CD14-positive monocyte (primary cell): ENCODE measurements at regions of chr2 and their contacts with region 1.

Region 1: DNA sequence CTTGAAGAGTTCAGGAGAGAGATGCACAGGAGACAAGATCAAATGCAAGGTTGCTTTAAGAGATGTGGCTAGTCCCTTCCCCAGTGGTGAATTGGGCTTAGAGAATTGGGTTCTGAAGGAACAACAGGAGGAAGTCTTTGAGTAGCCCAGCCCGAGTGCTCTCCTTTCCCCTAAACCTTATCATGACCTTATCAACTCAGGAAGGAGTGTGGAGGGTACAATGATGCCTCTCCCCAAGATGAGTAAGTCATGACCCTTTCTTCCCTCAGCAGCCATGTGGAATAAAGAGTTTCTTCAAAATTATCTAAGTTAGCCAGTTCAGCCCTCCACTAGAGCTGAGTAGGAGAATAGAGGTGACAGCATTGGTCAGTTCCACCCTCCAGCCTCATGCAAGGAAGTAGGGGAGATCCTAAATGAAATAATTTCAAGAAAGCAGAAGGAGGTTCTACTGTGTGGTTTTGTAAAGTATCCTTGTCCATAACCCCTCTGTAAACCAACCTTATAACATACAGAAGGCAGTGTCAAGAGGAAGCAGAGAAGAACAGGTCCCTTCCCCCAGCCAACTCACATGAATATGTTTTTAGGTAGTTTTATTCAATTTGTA is 88.4 kb downstream of the ARHGAP15 start:
- DNase-seq: peak; percentile 7 to 47 (median 19)
- H3K4me3 ChIP-seq: no peak overlapping the region
- H3K4me3 Mint-ChIP-seq: no peak overlapping the region
- H3K27ac ChIP-seq: peak overlapping the region in 1 of 2 donors; percentile 64
- H3K27ac Mint-ChIP-seq: peak overlapping the region; percentile 15 to 87 (median 63)
- H3K4me1 ChIP-seq: peaks cover 4 to 10% of the 10 kb centered on the region in 2 donors
- H3K4me1 Mint-ChIP-seq: peaks cover 10% of the 10 kb centered on the region
- H3K27me3 ChIP-seq: no peaks in the 10 kb centered on the region
- H3K27me3 Mint-ChIP-seq: no peaks in the 10 kb centered on the region
- CTCF ChIP-seq: no peak

Region 2: DNA sequence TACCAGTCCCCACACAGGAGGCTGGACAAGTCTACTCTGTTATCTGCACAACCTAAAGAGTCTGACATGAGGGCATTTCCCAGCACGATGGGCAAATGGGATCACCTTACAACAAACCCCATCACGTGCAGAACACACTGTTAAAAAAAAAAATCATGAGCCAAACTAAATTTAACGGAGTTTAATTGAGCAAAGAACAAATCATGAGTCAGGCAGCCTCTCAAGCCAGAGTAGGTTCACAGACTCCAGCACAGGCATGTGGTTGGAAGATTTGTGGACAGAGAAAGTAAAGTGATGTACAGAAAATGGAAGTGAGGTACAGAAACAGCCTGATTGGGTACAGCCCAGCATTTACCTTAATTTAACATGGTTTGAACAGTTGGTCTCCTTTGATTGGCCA is 280.3 kb before region 1 on chr2:
- intact Hi-C with region 1: no loop called
- DNase-seq: no peak
- H3K4me3 ChIP-seq: no peak overlapping the region
- H3K4me3 Mint-ChIP-seq: no peak overlapping the region
- H3K27ac ChIP-seq: no peak overlapping the region
- H3K27ac Mint-ChIP-seq: peak overlapping the region in 4 of 7 donors; percentile 11 to 68 (median 20)
- H3K4me1 ChIP-seq: no peaks in the 10 kb centered on the region
- H3K4me1 Mint-ChIP-seq: no peaks in the 10 kb centered on the region
- H3K27me3 ChIP-seq: no peaks in the 10 kb centered on the region
- H3K27me3 Mint-ChIP-seq: peaks cover 0 to 1% (median 0%) of the 10 kb centered on the region in 3 donors
- CTCF ChIP-seq: no peak

Region 3: GRCh38 chr2:143110758-143111428 is 106.7 kb before region 1 on chr2:
- intact Hi-C with region 1: loop called in 1 of 2 experiments (anchors 10 kb)
- DNase-seq: peak; percentile 53 to 69 (median 68)
- H3K4me3 ChIP-seq: peak overlapping the region in 1 of 3 experiments; percentile 33
- H3K4me3 Mint-ChIP-seq: peak overlapping the region in 1 of 2 donors; percentile 41
- H3K27ac ChIP-seq: peak overlapping the region in 1 of 2 donors; percentile 42
- H3K27ac Mint-ChIP-seq: peak overlapping the region in 6 of 7 donors; percentile 37 to 89 (median 68)
- H3K4me1 ChIP-seq: peaks cover 5 to 7% of the 10 kb centered on the region in 2 donors
- H3K4me1 Mint-ChIP-seq: peaks cover 10% of the 10 kb centered on the region
- H3K27me3 ChIP-seq: no peaks in the 10 kb centered on the region
- H3K27me3 Mint-ChIP-seq: no peaks in the 10 kb centered on the region
- CTCF ChIP-seq: peak; percentile 94

Region 4: DNA sequence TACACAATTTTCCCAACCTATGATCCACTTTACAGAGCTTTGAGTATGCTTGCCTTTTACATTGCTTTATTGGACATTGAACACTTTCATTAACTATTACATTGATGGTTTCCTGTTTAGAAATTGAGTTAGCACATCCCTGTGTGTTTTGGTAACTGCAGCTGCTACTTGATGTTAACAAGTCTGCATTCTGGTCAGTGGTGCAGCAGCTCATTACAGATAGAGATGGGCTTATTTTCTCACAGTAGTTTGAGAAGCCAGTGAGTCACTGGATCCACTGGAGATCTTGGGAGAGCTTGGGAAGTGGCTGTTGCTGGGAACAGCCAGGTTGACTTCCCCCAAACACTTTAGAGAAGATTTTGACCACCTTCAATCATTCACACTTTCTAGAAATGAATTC is 62.1 kb after region 1 on chr2:
- intact Hi-C with region 1: no loop called
- DNase-seq: no peak
- H3K4me3 ChIP-seq: no peak overlapping the region
- H3K4me3 Mint-ChIP-seq: no peak overlapping the region
- H3K27ac ChIP-seq: peak overlapping the region in 1 of 2 donors; percentile 32
- H3K27ac Mint-ChIP-seq: peak overlapping the region in 1 of 7 donors; percentile 76
- H3K4me1 ChIP-seq: no peaks in the 10 kb centered on the region
- H3K4me1 Mint-ChIP-seq: no peaks in the 10 kb centered on the region
- H3K27me3 ChIP-seq: no peaks in the 10 kb centered on the region
- H3K27me3 Mint-ChIP-seq: no peaks in the 10 kb centered on the region
- CTCF ChIP-seq: no peak